ENCODE measurements at regions of chr4 and their contacts with region 1.

Region 1: GRCh38 chr4:38782452-38783108 is at the start of gene TLR10:
- DNase-seq: no peak
- H3K4me3 ChIP-seq: no peak within 1 kb of the TSS
- H3K27ac ChIP-seq: no peak within 1 kb of the TSS
- H3K4me1 ChIP-seq: no peaks in the 10 kb centered on the region
- H3K27me3 ChIP-seq: no peaks in the 10 kb centered on the region
- CTCF ChIP-seq: peak; percentile 3 to 56 (median 49); a peak in 3 of 4 replicates
- EP300 ChIP-seq: no peak
- POLR2A ChIP-seq: no peak
- RAD21 ChIP-seq: peak; percentile 54 to 59
- total RNA-seq, gene TLR10: not detected in 2 replicates

Region 2: GRCh38 chr4:38768968-38769394 is 13.6 kb before region 1 on chr4:
- CTCF ChIA-PET with region 1: interaction called, 136 read pairs
- POLR2A ChIA-PET with region 1: no interaction called
- DNase-seq: no peak
- H3K4me3 ChIP-seq: no peak overlapping the region
- H3K27ac ChIP-seq: no peak overlapping the region
- H3K4me1 ChIP-seq: no peaks in the 10 kb centered on the region
- H3K27me3 ChIP-seq: no peaks in the 10 kb centered on the region
- CTCF ChIP-seq: no peak
- EP300 ChIP-seq: no peak
- POLR2A ChIP-seq: no peak
- RAD21 ChIP-seq: no peak

Region 3: GRCh38 chr4:38804654-38805295 is 22.2 kb after region 1 on chr4 and contains the start of gene TLR1:
- CTCF ChIA-PET with region 1: interaction called, 26 read pairs
- POLR2A ChIA-PET with region 1: no interaction called
- DNase-seq: no peak
- H3K4me3 ChIP-seq: no peak within 1 kb of the TSS
- H3K27ac ChIP-seq: no peak within 1 kb of the TSS
- H3K4me1 ChIP-seq: no peaks in the 10 kb centered on the region
- H3K27me3 ChIP-seq: no peaks in the 10 kb centered on the region
- CTCF ChIP-seq: peak in 1 of 3 experiments; percentile 16; a peak in 1 of 4 replicates
- EP300 ChIP-seq: no peak
- POLR2A ChIP-seq: no peak
- RAD21 ChIP-seq: peak in 1 of 2 experiments; percentile 7; a peak in 1 of 4 replicates
- total RNA-seq, gene TLR1: not detected in 2 replicates

Measured in H1 (cell line).